ENCODE measurements at regions of chr13 and their contacts with region 1.

Region 1: GRCh38 chr13:52127783-52128702 is 830 bp downstream of the NEK5 start:
- DNase-seq: peak; percentile 64
- H3K4me3 ChIP-seq: no peak overlapping the region
- H3K27ac ChIP-seq: no peak overlapping the region
- H3K4me1 ChIP-seq: no peaks in the 10 kb centered on the region
- CTCF ChIP-seq: peak; percentile 94

Region 2: DNA sequence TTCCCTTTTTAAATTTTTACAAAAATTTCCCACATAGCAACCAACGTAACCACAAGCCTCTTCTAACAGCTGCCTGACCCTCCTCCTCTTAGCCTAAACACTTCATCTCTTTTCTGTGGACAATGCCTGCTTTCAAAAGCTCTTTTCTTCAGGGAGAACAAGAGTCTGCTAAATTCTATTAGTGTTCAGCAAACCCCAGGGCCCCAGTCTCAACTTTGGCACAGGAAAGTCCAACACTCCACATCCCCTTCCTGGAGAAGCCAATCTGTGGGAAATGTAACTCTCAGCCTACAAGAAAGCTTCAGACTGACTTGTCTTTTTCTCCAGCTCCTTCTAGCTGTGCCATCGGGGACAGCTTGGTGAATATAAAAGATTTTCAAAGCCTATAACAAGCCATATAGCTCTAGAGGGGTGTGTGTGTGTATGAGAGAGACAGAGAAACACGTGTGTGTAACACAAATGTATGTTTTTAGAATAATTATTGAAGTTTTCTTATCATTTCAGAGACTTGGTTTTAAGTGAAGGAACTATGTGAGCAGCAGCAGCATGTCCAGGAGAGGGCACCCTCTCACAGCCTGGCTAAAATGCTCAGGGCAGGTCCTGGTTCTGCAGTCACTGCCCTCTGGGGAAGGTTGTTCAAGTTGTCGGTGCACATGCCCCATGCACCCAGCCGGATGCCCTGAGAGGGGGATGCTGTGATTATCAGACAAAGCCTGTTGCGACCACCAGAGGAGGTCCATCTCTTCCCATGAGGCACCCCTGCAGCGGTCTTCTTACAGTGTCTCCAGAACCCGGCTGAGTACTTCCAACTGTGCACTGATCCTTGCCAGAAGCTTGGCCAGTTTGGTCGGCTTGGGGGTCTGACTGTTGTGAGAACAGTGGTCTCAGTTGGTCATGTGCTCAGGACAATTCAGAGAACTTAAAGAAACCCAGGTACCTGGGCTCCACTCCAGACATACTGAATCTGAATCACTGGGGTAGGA is 231.8 kb before region 1 on chr13:
- CTCF ChIA-PET with region 1: no interaction called
- POLR2A ChIA-PET with region 1: no interaction called
- intact Hi-C with region 1: loop called (anchors 2 kb)
- DNase-seq: peak; percentile 61
- H3K4me3 ChIP-seq: no peak overlapping the region
- H3K27ac ChIP-seq: no peak overlapping the region
- H3K4me1 ChIP-seq: no peaks in the 10 kb centered on the region
- CTCF ChIP-seq: peak; percentile 87

Region 3: GRCh38 chr13:52001120-52001731 is 126.8 kb before region 1 on chr13:
- CTCF ChIA-PET with region 1: no interaction called
- POLR2A ChIA-PET with region 1: no interaction called
- intact Hi-C with region 1: loop called (anchors 2 kb)
- DNase-seq: peak; percentile 75
- H3K4me3 ChIP-seq: no peak overlapping the region
- H3K27ac ChIP-seq: no peak overlapping the region
- H3K4me1 ChIP-seq: no peaks in the 10 kb centered on the region
- CTCF ChIP-seq: peak; percentile 85

Measured in OCI-LY7 (cell line).